ENCODE measurements at regions of chrX and their contacts with region 1.

Region 1: GRCh38 chrX:109732780-109733657 is at the start of gene ACSL4:
- DNase-seq: peak; percentile 87
- H3K4me3 Mint-ChIP-seq: peak within 1 kb of the TSS; percentile 99
- H3K27ac Mint-ChIP-seq: peak within 1 kb of the TSS; percentile 99
- H3K4me1 Mint-ChIP-seq: peaks cover 28% of the 10 kb centered on the region
- H3K27me3 Mint-ChIP-seq: no peaks in the 10 kb centered on the region
- total RNA-seq, gene ACSL4: 63.2 to 63.3 TPM

Region 2: DNA sequence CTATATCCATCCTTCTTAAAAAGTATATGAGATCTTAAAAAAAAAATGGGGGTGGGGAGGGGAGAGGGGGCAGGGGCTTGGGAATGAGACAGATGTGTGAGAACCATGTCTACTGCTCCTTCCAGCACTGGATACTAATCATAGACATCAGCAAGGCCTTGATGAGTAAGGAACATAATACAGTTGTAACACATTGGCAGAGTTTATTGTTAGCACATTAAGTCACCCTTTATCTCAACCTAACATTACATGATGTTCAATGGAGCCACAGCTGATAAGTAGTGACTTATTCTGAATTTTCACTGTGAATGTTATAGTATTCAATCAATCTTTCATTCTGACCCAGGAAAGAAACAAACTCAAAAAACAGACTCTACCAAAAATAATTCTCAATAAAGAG is 60.8 kb before region 1 on chrX:
- CTCF ChIA-PET with region 1: no interaction called
- POLR2A ChIA-PET with region 1: no interaction called
- intact Hi-C with region 1: no loop called
- DNase-seq: no peak
- H3K4me3 Mint-ChIP-seq: no peak overlapping the region
- H3K27ac Mint-ChIP-seq: no peak overlapping the region
- H3K4me1 Mint-ChIP-seq: no peaks in the 10 kb centered on the region
- H3K27me3 Mint-ChIP-seq: no peaks in the 10 kb centered on the region

Region 3: DNA sequence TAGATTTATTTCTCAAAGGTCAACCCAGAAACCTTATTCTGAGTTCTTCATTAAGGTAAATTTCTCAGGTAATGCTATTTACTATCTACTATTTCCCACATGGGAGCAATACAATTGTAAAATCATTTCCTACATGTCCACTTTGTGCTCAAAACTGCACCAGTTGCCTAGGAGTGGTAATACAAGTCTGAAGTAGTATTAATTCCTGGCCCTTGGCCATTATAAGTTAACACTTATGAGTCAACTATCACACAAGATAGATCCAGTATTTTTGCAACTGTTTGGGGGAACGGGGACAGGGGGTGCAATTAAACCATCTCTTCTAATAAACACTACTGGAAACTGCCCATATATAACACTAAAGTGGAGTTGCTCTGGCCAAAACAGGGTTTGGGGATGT is 48.9 kb before region 1 on chrX:
- CTCF ChIA-PET with region 1: no interaction called
- POLR2A ChIA-PET with region 1: no interaction called
- intact Hi-C with region 1: loop called (anchors 2 kb)
- DNase-seq: no peak
- H3K4me3 Mint-ChIP-seq: no peak overlapping the region
- H3K27ac Mint-ChIP-seq: no peak overlapping the region
- H3K4me1 Mint-ChIP-seq: peaks cover 18% of the 10 kb centered on the region
- H3K27me3 Mint-ChIP-seq: no peaks in the 10 kb centered on the region

Region 4: GRCh38 chrX:109782994-109783700 is 50.1 kb after region 1 on chrX:
- CTCF ChIA-PET with region 1: no interaction called
- POLR2A ChIA-PET with region 1: interaction called, 5 read pairs
- intact Hi-C with region 1: loop called (anchors 5 kb)
- DNase-seq: peak; percentile 16
- H3K4me3 Mint-ChIP-seq: peak overlapping the region; percentile 34
- H3K27ac Mint-ChIP-seq: peak overlapping the region; percentile 69
- H3K4me1 Mint-ChIP-seq: peaks cover 13% of the 10 kb centered on the region
- H3K27me3 Mint-ChIP-seq: no peaks in the 10 kb centered on the region

Region 5: GRCh38 chrX:109856974-109857373 is 124.0 kb after region 1 on chrX:
- CTCF ChIA-PET with region 1: interaction called, 14 read pairs
- POLR2A ChIA-PET with region 1: no interaction called
- intact Hi-C with region 1: loop called (anchors 5 kb)
- DNase-seq: no peak
- H3K4me3 Mint-ChIP-seq: no peak overlapping the region
- H3K27ac Mint-ChIP-seq: no peak overlapping the region
- H3K4me1 Mint-ChIP-seq: peaks cover 3% of the 10 kb centered on the region
- H3K27me3 Mint-ChIP-seq: no peaks in the 10 kb centered on the region

Measured in activated CD4-positive, alpha-beta memory T cell treated with anti-CD3 and anti-CD28 coated beads for 36 hours (primary cell).